PC-9 (cell line): ENCODE measurements at regions of chr10 and their contacts with region 1.

Region 1: DNA sequence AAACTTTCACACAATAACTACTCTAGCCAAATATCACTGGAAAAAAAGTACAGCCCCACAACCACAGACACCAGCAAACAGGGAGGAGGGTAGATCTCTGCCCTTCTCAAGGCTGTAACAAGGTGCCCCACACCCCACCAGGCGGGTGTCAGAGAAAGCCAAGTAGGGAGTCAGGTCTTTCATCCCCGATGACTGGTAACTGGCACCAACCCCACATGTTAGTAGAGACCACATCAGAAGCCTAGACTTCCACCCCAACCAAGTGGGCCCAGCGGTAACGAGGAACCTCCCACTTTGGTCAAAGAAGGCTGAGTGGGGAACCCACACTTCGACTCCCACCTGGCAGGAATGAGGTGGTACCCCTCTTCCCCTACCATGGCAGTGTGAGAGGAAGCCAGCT is 16.4 kb upstream of the RUFY2 start:
- DNase-seq: no peak
- H3K4me3 ChIP-seq: no peak overlapping the region
- H3K27ac ChIP-seq: no peak overlapping the region
- H3K4me1 ChIP-seq: no peaks in the 10 kb centered on the region
- H3K27me3 ChIP-seq: no peaks in the 10 kb centered on the region
- CTCF ChIP-seq: no peak

Region 2: DNA sequence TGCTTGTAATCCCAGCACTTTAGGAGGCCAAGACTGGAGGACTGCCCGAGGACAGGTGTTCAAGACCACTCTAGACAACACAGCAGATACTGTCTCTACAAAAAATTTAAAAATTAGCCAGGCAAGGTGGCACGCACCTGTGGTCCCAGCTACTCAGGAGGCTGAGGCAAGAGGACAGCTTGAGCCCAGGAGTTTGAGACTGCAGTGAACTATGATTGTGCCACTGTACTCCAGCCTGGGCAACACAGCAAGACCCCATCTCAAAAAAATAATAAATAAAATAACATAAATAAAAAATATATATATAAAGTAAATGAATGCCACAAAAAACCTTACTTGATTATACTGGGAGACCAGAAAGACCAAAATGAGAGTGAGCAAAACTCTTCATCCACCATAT is 70.0 kb before region 1 on chr10:
- CTCF ChIA-PET with region 1: no interaction called
- POLR2A ChIA-PET with region 1: interaction called, 25 read pairs
- intact Hi-C with region 1: no loop called
- DNase-seq: no peak
- H3K4me3 ChIP-seq: no peak overlapping the region
- H3K27ac ChIP-seq: no peak overlapping the region
- H3K4me1 ChIP-seq: no peaks in the 10 kb centered on the region
- H3K27me3 ChIP-seq: no peaks in the 10 kb centered on the region
- CTCF ChIP-seq: no peak